ENCODE measurements at regions of chr1 and their contacts with region 1.

Region 1: GRCh38 chr1:119675349-119676345 is 27.6 kb upstream of the ZNF697 start:
- DNase-seq: peak; percentile 78
- H3K27ac ChIP-seq: peak overlapping the region; percentile 76
- CTCF ChIP-seq: peak; percentile 65

Region 2: GRCh38 chr1:119613769-119614720 is 61.6 kb before region 1 on chr1:
- CTCF ChIA-PET with region 1: interaction called, 33 read pairs
- POLR2A ChIA-PET with region 1: no interaction called
- DNase-seq: peak; percentile 61
- H3K27ac ChIP-seq: no peak overlapping the region
- CTCF ChIP-seq: peak; percentile 81

Region 3: DNA sequence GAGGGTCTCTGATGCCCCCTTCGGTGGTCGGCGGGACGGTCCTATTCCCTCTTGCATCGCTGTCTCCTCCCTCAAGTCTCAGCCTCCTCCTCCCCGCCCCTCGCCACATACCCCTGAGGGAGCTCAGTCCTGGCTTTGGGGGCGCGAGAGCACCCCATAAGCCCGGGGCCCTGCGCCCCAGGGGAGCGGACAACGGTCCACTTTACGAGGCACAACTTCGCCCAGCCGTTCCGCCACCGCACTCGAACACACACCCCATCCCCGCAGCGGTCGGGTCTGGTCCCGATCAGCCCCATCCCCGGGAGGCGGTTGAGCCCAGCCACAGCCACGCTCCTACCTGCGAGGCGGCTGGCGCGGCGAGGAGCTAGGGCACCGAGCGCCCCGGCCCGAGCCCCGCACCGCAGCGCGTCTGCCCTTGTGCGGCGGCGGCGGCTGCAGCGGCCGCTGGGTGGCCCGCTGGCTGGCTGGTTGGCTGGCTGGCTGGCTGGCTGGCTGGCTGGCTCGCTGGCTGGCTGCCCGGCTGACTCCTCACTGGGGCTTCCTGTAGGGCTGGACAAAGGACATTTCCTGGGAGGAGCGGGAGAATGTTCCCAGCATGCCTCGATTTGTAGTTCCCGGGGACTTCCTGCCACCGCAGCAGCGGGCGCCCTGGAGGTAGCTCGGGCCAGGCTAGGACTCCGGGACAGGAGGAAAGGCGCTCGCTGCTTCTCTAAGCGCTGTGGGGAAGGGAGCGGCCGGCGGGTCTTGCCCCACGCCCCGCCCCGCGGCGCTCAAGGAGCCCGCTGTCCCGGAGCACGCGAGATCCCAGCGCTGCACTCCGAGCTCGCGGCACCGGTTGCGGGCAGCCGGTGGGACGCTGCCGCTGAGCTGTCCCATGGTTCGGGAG is 27.7 kb before region 1 on chr1 and contains the start of gene ZNF697:
- CTCF ChIA-PET with region 1: interaction called, 32 read pairs
- POLR2A ChIA-PET with region 1: no interaction called
- DNase-seq: peak; percentile 96
- H3K27ac ChIP-seq: peak within 1 kb of the TSS; percentile 89
- CTCF ChIP-seq: peak; percentile 51

Region 4: GRCh38 chr1:119686649-119687048 is 11.0 kb after region 1 on chr1:
- CTCF ChIA-PET with region 1: interaction called, 18 read pairs
- POLR2A ChIA-PET with region 1: no interaction called
- DNase-seq: peak; percentile 79
- H3K27ac ChIP-seq: no peak overlapping the region
- CTCF ChIP-seq: no peak

Region 5: DNA sequence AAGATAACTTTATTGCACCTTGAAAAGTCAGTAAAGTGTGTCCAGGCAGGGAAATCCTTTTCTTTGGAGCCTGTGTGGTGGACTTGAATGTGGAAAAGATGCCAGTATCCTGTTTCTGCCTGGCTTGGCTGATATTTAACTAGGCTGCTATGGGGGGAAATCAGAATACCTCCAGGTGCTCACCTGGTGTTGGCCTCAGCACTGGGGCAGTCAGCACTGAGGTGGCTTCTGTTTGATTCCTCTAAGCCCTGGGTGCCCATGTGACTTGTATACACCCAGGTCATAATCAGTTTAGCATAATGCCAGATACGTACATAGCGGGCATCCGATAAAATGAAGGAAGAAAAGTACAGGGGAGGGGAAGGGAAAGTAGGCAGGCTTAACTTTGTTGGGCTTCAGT is 43.3 kb after region 1 on chr1:
- CTCF ChIA-PET with region 1: no interaction called
- POLR2A ChIA-PET with region 1: no interaction called
- DNase-seq: no peak
- H3K27ac ChIP-seq: no peak overlapping the region
- CTCF ChIP-seq: no peak